ENCODE measurements at regions of chr15 and their contacts with region 1.

Region 1: DNA sequence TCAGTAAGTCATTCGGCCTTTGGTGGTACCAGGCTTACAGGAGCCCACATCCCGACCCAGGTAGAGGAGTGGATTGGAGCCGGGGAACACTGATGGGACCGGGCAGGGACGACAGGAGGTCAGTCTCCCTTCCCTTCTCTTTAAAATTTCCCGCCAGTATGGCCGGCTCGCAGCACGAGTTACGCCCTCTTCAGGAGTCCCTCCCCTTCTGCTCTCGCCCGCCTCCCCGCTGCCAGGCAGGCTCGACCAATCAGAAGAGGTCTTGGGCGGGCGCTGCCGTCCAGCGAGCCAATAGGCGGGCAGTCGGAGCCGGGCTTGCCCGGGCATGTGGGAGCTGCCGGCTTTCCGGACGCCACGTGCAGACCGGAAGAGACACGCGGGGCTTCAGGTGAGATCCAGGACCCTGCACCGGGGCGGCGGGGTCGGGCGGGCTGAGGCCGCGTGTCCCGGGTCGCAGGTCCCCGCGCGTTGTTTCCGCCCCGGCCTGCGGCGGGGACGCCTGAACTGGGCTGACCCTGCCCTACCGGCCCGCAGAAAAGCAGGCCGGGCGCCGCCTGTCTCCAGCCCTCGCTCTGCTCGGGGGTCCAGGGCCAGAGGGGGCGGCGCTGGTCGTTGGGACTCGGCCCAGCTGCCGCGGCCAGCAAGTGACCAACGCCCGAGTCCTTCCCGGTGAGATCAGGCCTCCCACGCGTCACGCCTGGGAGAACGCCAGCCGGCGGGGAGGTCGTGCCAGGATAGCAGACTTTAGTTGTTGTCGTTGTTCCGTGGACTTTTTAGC is at the start of gene AEN:
- DNase-seq: peak; percentile 92 to 96 (median 95)
- ATAC-seq: peak; percentile 94
- H3K4me3 ChIP-seq: peak within 1 kb of the TSS; percentile 76
- H3K4me3 Mint-ChIP-seq: peak within 1 kb of the TSS; percentile 84 to 97 (median 90)
- H3K27ac ChIP-seq: peak within 1 kb of the TSS; percentile 90
- H3K27ac Mint-ChIP-seq: peak within 1 kb of the TSS; percentile 81 to 100 (median 94)
- H3K4me1 ChIP-seq: peaks cover 33 to 36% of the 10 kb centered on the region in 2 donors
- H3K4me1 Mint-ChIP-seq: peaks cover 23 to 49% (median 44%) of the 10 kb centered on the region in 7 donors
- H3K27me3 ChIP-seq: no peaks in the 10 kb centered on the region
- H3K27me3 Mint-ChIP-seq: peaks cover 0 to 7% (median 0%) of the 10 kb centered on the region in 5 donors
- total RNA-seq, gene AEN: 29.6 to 52.1 (median 44.2) TPM

Region 2: DNA sequence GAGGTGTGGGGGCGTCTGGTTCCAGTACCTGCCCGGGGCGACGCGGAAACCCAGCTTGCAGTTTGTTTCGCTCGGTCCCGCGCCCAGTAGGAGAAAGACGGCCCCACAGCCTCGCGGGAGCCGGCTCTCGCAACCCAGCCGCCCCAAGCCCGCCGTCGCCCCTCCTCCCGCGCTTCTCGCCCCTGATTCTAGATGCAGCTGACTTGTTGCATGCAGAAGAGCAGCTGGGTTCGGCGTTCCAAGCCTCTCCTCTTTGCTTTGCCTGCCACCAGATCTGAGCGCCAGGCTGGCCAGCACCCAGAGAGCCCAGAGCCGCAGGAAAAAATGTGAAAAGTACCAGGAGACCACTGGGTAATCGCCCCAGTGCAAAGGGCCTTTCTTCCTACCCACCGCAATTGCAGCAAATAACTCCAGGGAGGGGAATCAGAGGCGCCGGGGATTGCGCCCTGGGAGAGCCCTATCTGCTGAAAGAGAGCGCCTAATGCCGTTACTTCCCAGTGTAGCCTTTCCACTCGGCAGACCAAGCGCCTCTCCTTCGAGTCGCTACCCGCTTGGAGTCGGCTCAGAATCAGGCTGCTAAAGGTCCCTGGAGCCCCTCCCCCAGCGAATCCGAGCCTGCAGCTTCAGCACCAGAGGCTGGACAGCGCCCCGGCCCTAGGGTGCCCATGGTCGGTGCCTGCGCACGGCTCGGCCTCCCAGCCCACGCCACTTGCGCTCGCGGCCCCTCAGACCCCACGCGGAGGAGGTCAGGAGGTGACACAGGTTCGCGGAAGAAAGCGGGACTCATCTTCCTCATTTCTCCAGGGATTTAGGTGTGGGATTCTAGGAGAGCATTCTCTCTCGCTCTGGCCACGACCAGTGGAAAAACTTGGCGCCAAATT is 15.8 kb before region 1 on chr15:
- CTCF ChIA-PET with region 1: no interaction called
- POLR2A ChIA-PET with region 1: no interaction called
- intact Hi-C with region 1: loop called in 1 of 2 experiments (anchors 2 kb)
- DNase-seq: peak in 8 of 9 donors; percentile 37 to 67 (median 55)
- ATAC-seq: peak; percentile 77
- H3K4me3 ChIP-seq: no peak overlapping the region
- H3K4me3 Mint-ChIP-seq: peak overlapping the region in 8 of 10 donors; percentile 38 to 65 (median 51)
- H3K27ac ChIP-seq: no peak overlapping the region
- H3K27ac Mint-ChIP-seq: no peak overlapping the region
- H3K4me1 ChIP-seq: peaks cover 0 to 15% of the 10 kb centered on the region in 2 donors
- H3K4me1 Mint-ChIP-seq: peaks cover 0 to 33% (median 24%) of the 10 kb centered on the region in 7 donors
- H3K27me3 ChIP-seq: peaks cover 0 to 14% of the 10 kb centered on the region in 2 donors
- H3K27me3 Mint-ChIP-seq: peaks cover 67 to 80% (median 76%) of the 10 kb centered on the region in 5 donors

Region 3: GRCh38 chr15:88657326-88658069 is 36.3 kb after region 1 on chr15:
- CTCF ChIA-PET with region 1: interaction called, 28 read pairs
- POLR2A ChIA-PET with region 1: interaction called, 7 read pairs
- intact Hi-C with region 1: loop called in 1 of 2 experiments (anchors 2 kb)
- DNase-seq: no peak
- ATAC-seq: no peak
- H3K4me3 ChIP-seq: no peak overlapping the region
- H3K4me3 Mint-ChIP-seq: peak overlapping the region in 6 of 10 donors; percentile 38 to 74 (median 49)
- H3K27ac ChIP-seq: peak overlapping the region; percentile 59
- H3K27ac Mint-ChIP-seq: peak overlapping the region in 8 of 9 donors; percentile 71 to 92 (median 89)
- H3K4me1 ChIP-seq: peaks cover 16 to 81% of the 10 kb centered on the region in 2 donors
- H3K4me1 Mint-ChIP-seq: peaks cover 11 to 99% (median 85%) of the 10 kb centered on the region in 7 donors
- H3K27me3 ChIP-seq: no peaks in the 10 kb centered on the region
- H3K27me3 Mint-ChIP-seq: no peaks in the 10 kb centered on the region

Region 4: DNA sequence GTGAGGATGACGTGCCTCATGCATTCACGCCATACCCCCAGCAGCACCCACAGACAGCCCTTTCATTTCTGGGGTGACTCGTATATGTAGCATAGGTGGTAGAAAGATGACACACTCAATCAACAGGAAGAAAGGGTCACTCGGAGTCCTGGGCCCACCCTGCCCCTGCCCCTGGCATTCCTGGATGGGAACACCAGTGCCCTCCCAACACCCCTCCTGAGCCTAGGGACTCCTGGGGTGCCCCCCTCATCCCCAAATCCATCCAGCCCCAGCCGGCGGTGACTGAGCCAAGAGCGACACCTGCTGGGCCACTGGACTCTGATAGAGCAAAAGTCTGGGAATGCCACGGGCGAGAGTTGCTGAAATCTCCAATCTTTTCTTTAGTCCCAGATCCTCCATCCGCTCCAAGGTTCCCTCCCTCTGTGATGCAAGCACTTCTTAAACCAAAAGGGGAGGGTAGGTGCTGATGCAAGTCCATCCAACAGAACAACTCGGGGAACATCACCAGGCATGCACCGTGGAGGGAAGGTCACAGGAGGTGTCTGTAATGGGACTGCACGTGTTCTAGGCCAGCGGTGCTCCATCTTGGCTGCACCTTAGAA is 213.1 kb after region 1 on chr15:
- CTCF ChIA-PET with region 1: interaction called, 3 read pairs
- POLR2A ChIA-PET with region 1: no interaction called
- intact Hi-C with region 1: loop called (anchors 1 kb)
- DNase-seq: peak in 4 of 9 donors; percentile 5 to 26 (median 10)
- ATAC-seq: peak; percentile 25
- H3K4me3 ChIP-seq: no peak overlapping the region
- H3K4me3 Mint-ChIP-seq: no peak overlapping the region
- H3K27ac ChIP-seq: no peak overlapping the region
- H3K27ac Mint-ChIP-seq: no peak overlapping the region
- H3K4me1 ChIP-seq: no peaks in the 10 kb centered on the region
- H3K4me1 Mint-ChIP-seq: peaks cover 0 to 5% (median 0%) of the 10 kb centered on the region in 7 donors
- H3K27me3 ChIP-seq: no peaks in the 10 kb centered on the region
- H3K27me3 Mint-ChIP-seq: peaks cover 0 to 12% (median 0%) of the 10 kb centered on the region in 5 donors

Region 5: DNA sequence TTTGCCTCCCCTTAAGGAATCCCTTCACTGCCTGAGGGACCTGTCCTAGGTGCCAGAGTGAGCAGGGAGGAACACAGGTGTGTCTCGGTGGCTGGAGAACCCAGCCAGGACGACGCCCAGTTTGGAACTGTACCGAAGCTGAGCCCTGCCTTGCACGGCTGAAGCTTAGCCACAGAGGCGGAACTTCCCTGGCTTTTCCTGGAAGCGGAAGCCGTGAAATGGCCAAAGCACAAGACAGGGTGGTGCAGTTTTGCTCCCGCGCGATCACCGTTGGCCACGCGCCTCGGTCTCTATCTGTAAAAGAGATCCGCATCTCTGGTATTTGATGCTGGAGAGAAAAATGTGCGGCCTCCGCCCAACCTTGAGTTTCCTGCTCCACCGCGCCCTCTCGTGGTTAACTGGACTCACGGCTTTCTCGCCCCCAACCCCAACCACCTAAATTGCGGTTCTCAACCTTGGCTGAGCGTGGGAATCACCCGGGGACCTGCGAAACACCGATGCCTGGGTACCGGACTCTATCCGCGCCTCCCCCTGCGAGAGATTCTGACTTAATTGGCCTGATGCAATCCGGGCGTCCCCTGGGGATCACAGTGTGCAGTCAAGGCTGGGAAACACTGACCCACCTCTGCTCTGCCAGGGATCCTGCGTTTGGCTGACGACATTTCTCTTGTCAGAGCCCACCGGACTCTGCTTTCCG is 396.3 kb after region 1 on chr15:
- CTCF ChIA-PET with region 1: no interaction called
- POLR2A ChIA-PET with region 1: no interaction called
- intact Hi-C with region 1: loop called (anchors 2 kb)
- DNase-seq: peak; percentile 73 to 88 (median 82)
- ATAC-seq: peak; percentile 96
- H3K4me3 ChIP-seq: peak overlapping the region; percentile 31
- H3K4me3 Mint-ChIP-seq: peak overlapping the region; percentile 56 to 83 (median 70)
- H3K27ac ChIP-seq: no peak overlapping the region
- H3K27ac Mint-ChIP-seq: peak overlapping the region; percentile 26 to 91 (median 78)
- H3K4me1 ChIP-seq: peaks cover 10 to 13% of the 10 kb centered on the region in 2 donors
- H3K4me1 Mint-ChIP-seq: peaks cover under 1 to 28% (median 13%) of the 10 kb centered on the region in 7 donors
- H3K27me3 ChIP-seq: no peaks in the 10 kb centered on the region
- H3K27me3 Mint-ChIP-seq: peaks cover 0 to 45% (median 0%) of the 10 kb centered on the region in 5 donors

Region 6: DNA sequence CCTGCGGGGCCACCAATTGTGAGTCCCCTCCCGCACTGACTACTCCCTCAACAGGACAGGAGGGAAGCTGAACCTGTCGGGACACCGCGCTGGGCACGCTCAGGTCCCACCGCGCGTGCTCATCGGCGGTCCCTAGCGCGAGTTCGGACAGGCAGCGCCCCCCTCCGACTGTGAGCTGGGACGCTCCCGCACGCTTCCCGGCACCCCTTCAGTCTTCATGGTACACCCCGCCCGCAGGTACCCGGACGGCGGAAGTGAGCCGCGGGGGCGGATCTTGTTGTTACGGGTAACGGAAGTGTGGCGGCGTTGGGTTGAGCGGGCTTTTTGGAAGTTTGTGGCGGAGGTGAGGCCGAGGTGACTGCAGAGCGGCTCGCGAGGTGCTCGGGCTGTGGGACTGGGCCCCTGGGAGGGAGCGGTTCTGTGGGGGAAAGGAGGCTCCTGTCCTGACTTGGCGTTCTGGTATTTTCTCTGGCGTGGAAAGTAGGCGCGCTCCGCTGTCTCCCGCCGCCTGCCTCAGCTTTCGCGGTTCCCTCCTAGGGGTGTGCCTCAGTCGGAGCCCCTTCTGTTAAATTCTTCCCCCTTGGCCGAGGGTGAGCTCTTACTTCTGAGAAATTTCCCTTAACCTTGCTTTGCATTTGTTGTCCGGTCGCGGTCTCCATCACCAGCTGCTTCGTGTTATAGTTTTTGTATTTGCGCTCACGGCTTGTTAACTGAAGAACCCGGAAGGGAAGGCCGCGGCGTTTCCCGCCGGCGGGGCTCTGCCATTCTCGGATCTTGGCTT is 622.7 kb after region 1 on chr15 and contains the start of gene FANCI:
- CTCF ChIA-PET with region 1: no interaction called
- POLR2A ChIA-PET with region 1: no interaction called
- intact Hi-C with region 1: loop called (anchors 5 kb)
- DNase-seq: peak; percentile 89 to 97 (median 94)
- ATAC-seq: peak; percentile 100
- H3K4me3 ChIP-seq: peak within 1 kb of the TSS; percentile 79
- H3K4me3 Mint-ChIP-seq: peak within 1 kb of the TSS; percentile 86 to 98 (median 94)
- H3K27ac ChIP-seq: peak within 1 kb of the TSS; percentile 65
- H3K27ac Mint-ChIP-seq: peak within 1 kb of the TSS; percentile 78 to 96 (median 84)
- H3K4me1 ChIP-seq: peaks cover 6 to 13% of the 10 kb centered on the region in 2 donors
- H3K4me1 Mint-ChIP-seq: peaks cover 20 to 40% (median 26%) of the 10 kb centered on the region in 7 donors
- H3K27me3 ChIP-seq: no peaks in the 10 kb centered on the region
- H3K27me3 Mint-ChIP-seq: peaks cover 0 to 8% (median 0%) of the 10 kb centered on the region in 5 donors
- total RNA-seq, gene FANCI: 8.0 to 132 (median 9.7) TPM

Region 7: DNA sequence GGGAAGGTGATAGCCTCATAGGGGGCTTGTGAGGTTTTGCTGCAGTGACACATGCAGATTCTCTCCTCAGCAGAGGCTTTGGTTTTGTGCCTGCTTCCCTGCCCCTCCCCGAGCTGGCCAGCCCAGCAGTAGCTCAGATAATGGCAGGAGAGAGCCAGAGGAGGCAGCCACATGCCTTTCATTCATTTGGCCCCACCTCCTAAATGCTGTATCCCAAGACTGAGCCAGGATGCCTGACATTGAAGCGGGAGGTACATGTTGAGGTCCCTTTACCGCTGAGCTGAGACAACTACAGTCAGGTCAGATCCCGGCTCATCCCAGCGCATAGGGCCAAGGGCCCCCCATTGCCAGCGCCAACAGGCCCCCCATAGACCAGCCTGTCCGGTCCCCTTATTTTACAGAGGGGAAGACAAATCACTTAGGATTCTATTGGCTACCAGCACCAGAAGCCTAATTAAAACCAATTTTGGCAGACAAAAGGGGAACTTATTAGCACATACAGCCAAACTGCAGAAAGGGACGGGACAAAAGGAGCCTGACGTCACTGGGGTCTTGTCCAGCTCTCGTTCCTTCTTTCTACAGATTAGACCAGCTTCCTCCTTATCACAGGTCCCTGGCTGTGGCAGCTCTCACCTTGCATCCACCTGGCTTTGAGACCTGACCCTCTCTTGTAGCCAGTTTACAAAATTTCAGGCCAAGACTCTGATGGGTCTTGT is 725.5 kb after region 1 on chr15:
- CTCF ChIA-PET with region 1: no interaction called
- POLR2A ChIA-PET with region 1: no interaction called
- intact Hi-C with region 1: no loop called
- DNase-seq: no peak
- ATAC-seq: no peak
- H3K4me3 ChIP-seq: no peak overlapping the region
- H3K4me3 Mint-ChIP-seq: no peak overlapping the region
- H3K27ac ChIP-seq: no peak overlapping the region
- H3K27ac Mint-ChIP-seq: no peak overlapping the region
- H3K4me1 ChIP-seq: no peaks in the 10 kb centered on the region
- H3K4me1 Mint-ChIP-seq: peaks cover 0 to 4% (median 0%) of the 10 kb centered on the region in 7 donors
- H3K27me3 ChIP-seq: peaks cover 0 to 6% of the 10 kb centered on the region in 2 donors
- H3K27me3 Mint-ChIP-seq: peaks cover 5 to 20% (median 11%) of the 10 kb centered on the region in 5 donors

Measured in naive thymus-derived CD4-positive, alpha-beta T cell (primary cell).